Activated naive CD4-positive, alpha-beta T cell treated with anti-CD3 and anti-CD28 coated beads for 36 hours (primary cell): ENCODE measurements at regions of chr1 and their contacts with region 1.

Region 1: GRCh38 chr1:6464514-6464836 is 1.5 kb downstream of the TNFRSF25 start:
- DNase-seq: peak; percentile 85
- H3K4me3 Mint-ChIP-seq: peak overlapping the region; percentile 92
- H3K27ac Mint-ChIP-seq: peak overlapping the region; percentile 87
- H3K4me1 Mint-ChIP-seq: peaks cover 51% of the 10 kb centered on the region
- H3K27me3 Mint-ChIP-seq: no peaks in the 10 kb centered on the region

Region 2: GRCh38 chr1:5992026-5992813 is 472.3 kb before region 1 on chr1 and contains the start of gene NPHP4:
- CTCF ChIA-PET with region 1: no interaction called
- intact Hi-C with region 1: loop called (anchors 2 kb)
- DNase-seq: peak; percentile 100
- H3K4me3 Mint-ChIP-seq: peak within 1 kb of the TSS; percentile 81
- H3K27ac Mint-ChIP-seq: peak within 1 kb of the TSS; percentile 79
- H3K4me1 Mint-ChIP-seq: peaks cover 22% of the 10 kb centered on the region
- H3K27me3 Mint-ChIP-seq: no peaks in the 10 kb centered on the region
- total RNA-seq, gene NPHP4: 10.7 to 11.2 TPM

Region 3: DNA sequence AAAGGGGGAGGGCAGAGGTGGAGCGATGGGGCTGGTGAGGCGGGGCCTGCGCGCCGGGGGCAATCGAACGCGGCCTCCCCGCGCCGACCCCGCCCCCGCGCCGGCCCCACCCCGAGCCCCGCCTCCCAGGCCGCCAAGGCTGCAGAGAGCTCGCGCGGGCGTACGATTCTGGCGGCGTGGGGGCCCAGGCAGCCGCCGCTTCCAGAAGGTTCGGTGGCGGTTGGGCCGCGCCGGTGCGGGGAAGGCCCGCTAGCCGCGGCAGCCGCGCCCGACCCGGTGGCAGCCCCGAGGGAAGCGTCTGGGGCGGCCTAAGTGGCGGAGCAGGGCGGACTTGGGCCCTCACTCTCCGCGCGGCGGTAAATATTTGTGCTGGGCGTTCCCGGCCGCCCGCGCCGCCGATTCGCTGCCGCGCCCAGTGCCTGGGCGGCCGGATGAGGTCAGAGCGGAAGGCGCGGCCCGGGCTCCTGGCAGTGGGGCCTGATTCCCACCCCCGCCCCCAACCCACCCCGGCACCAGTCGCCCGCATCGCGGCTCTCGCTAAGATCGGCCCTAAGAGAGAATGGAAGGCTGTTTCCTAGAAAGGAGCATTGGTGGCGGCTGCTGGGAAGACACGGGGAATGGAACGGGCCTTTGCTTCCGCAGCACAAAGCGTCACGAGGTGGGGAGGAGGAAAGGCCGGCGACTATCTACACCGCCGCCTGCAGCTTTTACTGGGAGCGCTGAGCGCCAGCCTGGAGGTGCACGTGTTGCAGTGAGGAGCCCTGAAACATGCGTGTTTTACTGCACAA is 70.9 kb before region 1 on chr1 and contains the start of gene ACOT7:
- CTCF ChIA-PET with region 1: no interaction called
- intact Hi-C with region 1: loop called (anchors 2 kb)
- DNase-seq: peak; percentile 94
- H3K4me3 Mint-ChIP-seq: peak within 1 kb of the TSS; percentile 81
- H3K27ac Mint-ChIP-seq: peak within 1 kb of the TSS; percentile 84
- H3K4me1 Mint-ChIP-seq: peaks cover 21% of the 10 kb centered on the region
- H3K27me3 Mint-ChIP-seq: no peaks in the 10 kb centered on the region
- total RNA-seq, gene ACOT7: 74.2 to 77.6 TPM

Region 4: GRCh38 chr1:6438047-6438525 is 26.4 kb before region 1 on chr1:
- CTCF ChIA-PET with region 1: interaction called, 18 read pairs
- intact Hi-C with region 1: no loop called
- DNase-seq: peak; percentile 81
- H3K4me3 Mint-ChIP-seq: no peak overlapping the region
- H3K27ac Mint-ChIP-seq: no peak overlapping the region
- H3K4me1 Mint-ChIP-seq: peaks cover 3% of the 10 kb centered on the region
- H3K27me3 Mint-ChIP-seq: peaks cover 27% of the 10 kb centered on the region

Region 5: DNA sequence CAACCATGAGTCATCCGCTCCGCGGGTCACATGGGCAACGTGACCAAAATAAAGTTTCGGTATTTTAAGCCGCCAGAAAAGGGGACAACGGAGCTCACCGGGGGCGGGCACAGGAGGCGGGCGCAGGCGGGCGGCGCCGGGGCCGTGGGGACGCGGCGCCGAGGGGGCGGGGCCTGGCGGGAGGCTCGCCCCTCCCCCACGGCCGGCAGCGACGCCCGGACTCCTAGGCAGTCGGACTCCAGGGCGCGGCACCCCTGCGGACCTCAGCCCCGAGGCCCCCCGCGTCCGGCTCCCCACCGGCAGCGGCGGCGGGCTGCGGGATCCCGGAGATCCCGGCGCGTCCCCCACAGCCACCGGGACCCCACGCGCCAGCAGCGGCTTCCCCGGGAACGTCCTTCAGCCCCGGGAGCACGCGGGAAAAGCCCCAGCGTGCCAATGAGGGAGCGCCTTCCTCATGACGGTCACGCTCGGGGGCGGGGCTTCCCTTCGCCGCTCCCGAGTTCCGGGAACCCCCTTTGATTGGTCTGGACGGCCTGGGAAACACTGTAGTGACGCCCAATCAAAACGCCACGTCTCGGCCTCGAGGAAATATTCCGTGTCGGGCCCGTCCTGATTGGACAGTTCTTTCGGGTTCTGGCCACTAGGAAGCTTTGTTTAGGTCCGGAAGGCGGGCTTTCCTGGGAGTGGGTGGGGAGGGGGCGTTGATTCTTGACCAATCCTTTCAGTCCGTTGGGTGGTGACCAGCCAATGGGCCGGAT is 320.3 kb after region 1 on chr1:
- CTCF ChIA-PET with region 1: no interaction called
- intact Hi-C with region 1: loop called (anchors 2 kb)
- DNase-seq: peak; percentile 100
- H3K4me3 Mint-ChIP-seq: peak overlapping the region; percentile 79
- H3K27ac Mint-ChIP-seq: peak overlapping the region; percentile 69
- H3K4me1 Mint-ChIP-seq: peaks cover 41% of the 10 kb centered on the region
- H3K27me3 Mint-ChIP-seq: no peaks in the 10 kb centered on the region